ENCODE measurements at regions of chr17 and their contacts with region 1.

Region 1: GRCh38 chr17:17836250-17836817 is 452 bp downstream of the SREBF1 start:
- DNase-seq: peak; percentile 96
- H3K4me3 Mint-ChIP-seq: peak overlapping the region; percentile 86
- H3K27ac Mint-ChIP-seq: peak overlapping the region; percentile 95
- H3K4me1 Mint-ChIP-seq: peaks cover 41% of the 10 kb centered on the region
- H3K27me3 Mint-ChIP-seq: no peaks in the 10 kb centered on the region
- CTCF ChIP-seq: no peak

Region 2: GRCh38 chr17:17739388-17740066 is 96.8 kb before region 1 on chr17:
- CTCF ChIA-PET with region 1: no interaction called
- intact Hi-C with region 1: loop called (anchors 5 kb)
- DNase-seq: no peak
- H3K4me3 Mint-ChIP-seq: peak overlapping the region; percentile 36
- H3K27ac Mint-ChIP-seq: peak overlapping the region; percentile 67
- H3K4me1 Mint-ChIP-seq: peaks cover 56% of the 10 kb centered on the region
- H3K27me3 Mint-ChIP-seq: no peaks in the 10 kb centered on the region
- CTCF ChIP-seq: no peak